ENCODE measurements at regions of chr1 and their contacts with region 1.

Region 1: GRCh38 chr1:37553927-37554808 is at the start of gene SNIP1:
- DNase-seq: peak; percentile 95 to 98 (median 96)
- ATAC-seq: peak; percentile 95
- H3K4me3 ChIP-seq: peak within 1 kb of the TSS; percentile 82
- H3K27ac ChIP-seq: peak within 1 kb of the TSS; percentile 86
- H3K4me1 ChIP-seq: peaks cover 21 to 24% of the 10 kb centered on the region in 2 experiments
- H3K27me3 ChIP-seq: no peaks in the 10 kb centered on the region
- CTCF ChIP-seq: no peak
- EP300 ChIP-seq: 0 out of 2 replicates have a peak, but pooled peaks have one; percentile 24
- POLR2A ChIP-seq: peak; percentile 94
- RAD21 ChIP-seq: no peak
- polyA plus RNA-seq, gene SNIP1: 2.9 TPM

Region 2: DNA sequence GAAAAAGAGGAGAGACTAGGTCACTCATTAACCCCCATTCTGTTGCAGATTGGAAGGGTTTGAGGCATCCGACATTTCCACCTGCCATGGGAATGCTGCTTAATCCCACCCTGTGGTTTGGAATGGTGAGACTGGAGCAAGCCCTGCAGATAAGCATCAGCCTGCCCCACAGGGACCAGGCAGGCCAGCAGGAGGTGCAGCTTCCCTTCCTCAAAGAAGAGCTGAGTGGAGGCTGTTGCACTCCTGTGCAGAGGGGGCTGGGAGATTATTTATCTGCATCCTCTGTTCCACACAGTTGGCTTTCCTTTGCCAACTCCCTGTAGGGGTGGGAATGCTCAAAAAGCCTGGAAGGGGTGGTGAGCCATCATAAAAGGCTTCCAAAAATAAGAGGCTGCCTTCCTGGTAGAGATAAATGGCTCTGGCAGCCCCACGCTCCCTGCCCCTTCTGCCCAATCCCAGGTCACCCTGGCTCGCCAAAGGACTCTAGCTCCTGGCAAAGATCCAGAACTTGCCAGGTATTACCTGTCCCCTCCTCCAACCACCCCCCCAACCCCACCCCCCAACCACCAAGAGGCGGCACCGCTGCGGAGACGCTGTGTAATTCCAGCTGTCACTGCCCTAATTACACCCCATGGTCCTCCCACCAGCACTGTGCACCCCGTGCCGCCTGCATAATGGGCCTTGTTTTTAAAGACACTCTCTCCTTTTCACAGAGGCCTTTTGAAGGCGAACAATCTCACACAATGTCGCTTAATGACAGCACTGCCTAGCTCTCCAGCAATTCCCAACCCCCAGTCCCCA is 162.8 kb before region 1 on chr1:
- CTCF ChIA-PET with region 1: no interaction called
- POLR2A ChIA-PET with region 1: no interaction called
- in situ Hi-C with region 1: no loop called
- intact Hi-C with region 1: no loop called
- DNase-seq: peak in 2 of 4 experiments; percentile 26 to 50
- ATAC-seq: peak; percentile 82
- H3K4me3 ChIP-seq: no peak overlapping the region
- H3K27ac ChIP-seq: no peak overlapping the region
- H3K4me1 ChIP-seq: no peaks in the 10 kb centered on the region
- H3K27me3 ChIP-seq: peaks cover 6 to 32% of the 10 kb centered on the region in 2 experiments; a peak in 3 of 5 replicates
- CTCF ChIP-seq: peak; percentile 56 to 63 (median 58); a peak in 5 of 6 replicates
- EP300 ChIP-seq: no peak
- POLR2A ChIP-seq: no peak
- RAD21 ChIP-seq: peak in 1 of 2 experiments; percentile 64; a peak in 2 of 4 replicates

Region 3: DNA sequence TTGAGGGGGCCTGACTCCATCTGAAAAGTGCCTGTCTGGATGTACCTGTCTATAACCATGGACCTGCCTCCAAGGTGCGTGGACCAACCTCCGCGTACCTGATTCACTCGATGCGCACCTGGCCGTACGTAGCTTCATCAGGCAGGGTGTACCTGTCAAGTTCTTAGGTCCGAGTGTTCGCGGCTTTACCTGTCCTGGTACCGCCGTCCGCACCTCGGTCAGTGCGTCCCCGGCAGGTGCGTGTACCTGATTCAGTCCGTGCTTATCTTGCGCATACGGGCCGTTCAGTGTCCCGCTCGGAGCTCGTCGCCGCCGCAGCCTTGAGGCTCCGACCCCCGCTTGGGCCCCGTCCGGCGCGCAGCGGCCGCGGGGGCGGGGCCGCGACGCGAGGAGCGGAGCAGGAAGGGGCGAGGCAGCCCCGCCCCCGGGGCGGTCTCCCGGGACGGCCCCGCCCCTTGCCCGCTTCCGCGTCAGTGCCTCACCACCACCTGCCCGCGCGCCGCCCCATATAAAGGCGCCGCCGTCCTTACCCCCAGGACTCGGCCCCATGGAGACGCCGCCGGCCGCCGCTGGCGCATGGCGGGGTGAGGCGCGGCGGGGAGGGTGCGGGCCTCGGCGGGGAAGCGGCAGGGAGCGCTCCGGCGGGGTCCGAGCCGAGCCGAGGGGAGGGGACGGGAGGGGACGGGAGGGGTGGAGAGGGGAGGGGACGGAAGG is 80.0 kb before region 1 on chr1 and contains the start of gene ZC3H12A:
- CTCF ChIA-PET with region 1: no interaction called
- POLR2A ChIA-PET with region 1: interaction called, 3 read pairs
- in situ Hi-C with region 1: no loop called
- intact Hi-C with region 1: loop called (anchors 10 kb)
- DNase-seq: peak; percentile 96 to 99 (median 99)
- ATAC-seq: peak; percentile 87
- H3K4me3 ChIP-seq: peak within 1 kb of the TSS; percentile 77
- H3K27ac ChIP-seq: peak within 1 kb of the TSS; percentile 94
- H3K4me1 ChIP-seq: peaks cover 52 to 62% of the 10 kb centered on the region in 2 experiments
- H3K27me3 ChIP-seq: 0 out of 5 replicates have a peak, but pooled peaks cover 0 to 3% of the 10 kb centered on the region in 2 experiments
- CTCF ChIP-seq: no peak
- EP300 ChIP-seq: 0 out of 2 replicates have a peak, but pooled peaks have one; percentile 9
- POLR2A ChIP-seq: peak; percentile 83
- RAD21 ChIP-seq: no peak
- polyA plus RNA-seq, gene ZC3H12A: 0.14 to 0.22 TPM